MCF 10A (cell line): ENCODE measurements at regions of chr11 and their contacts with region 1.

Region 1: DNA sequence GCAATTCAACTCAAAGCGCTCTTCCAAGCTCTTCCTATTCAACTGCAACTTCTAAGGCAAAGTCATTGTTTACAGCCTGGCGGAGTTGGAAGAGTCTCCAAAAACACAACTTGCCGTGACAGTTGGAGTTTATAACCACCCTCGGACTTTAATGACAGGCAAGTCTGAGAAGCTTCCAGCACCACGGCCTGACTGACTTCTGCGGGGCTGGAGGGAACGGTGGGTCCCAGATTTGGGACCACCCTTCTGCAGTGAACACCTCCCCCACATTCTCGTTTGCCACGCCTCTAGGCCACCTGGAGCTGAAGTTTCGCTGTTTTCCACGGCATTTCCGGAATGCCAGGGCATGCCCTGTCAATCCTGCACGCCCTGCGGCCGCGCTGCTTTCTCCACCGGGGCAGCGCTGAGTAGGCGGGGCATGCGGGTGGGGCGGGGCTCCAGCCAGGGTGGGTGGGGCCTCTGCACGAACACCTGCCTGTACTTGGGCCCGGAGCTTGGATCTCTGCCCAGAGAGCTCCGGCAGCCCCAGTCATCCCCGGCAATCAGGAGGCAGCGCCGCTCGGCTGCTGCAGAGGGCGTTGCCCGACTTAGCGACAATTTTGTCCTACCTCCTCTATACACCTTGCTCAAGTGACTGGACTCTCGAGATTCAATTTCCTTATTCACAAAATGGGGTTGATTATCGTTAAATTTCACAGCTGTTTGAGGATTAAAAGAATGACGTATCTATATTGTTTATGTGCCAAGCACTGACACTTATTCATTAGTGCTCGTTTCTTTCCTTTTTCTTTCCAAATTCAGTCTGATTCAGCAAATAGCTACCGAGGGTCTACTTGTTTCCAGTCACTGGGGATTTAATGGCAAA is 48.7 kb upstream of the BIRC3 start:
- DNase-seq: peak; percentile 96
- H3K4me3 Mint-ChIP-seq: peak overlapping the region; percentile 80
- H3K27ac Mint-ChIP-seq: peak overlapping the region; percentile 93
- H3K4me1 Mint-ChIP-seq: peaks cover 28% of the 10 kb centered on the region
- H3K27me3 Mint-ChIP-seq: no peaks in the 10 kb centered on the region
- CTCF ChIP-seq: peak; percentile 37

Region 2: GRCh38 chr11:101914738-101915426 is 353.7 kb before region 1 on chr11 and contains the start of gene CEP126:
- CTCF ChIA-PET with region 1: interaction called, 7 read pairs
- POLR2A ChIA-PET with region 1: interaction called, 18 read pairs
- intact Hi-C with region 1: loop called (anchors 1 kb)
- DNase-seq: peak; percentile 92
- H3K4me3 Mint-ChIP-seq: peak within 1 kb of the TSS; percentile 96
- H3K27ac Mint-ChIP-seq: peak within 1 kb of the TSS; percentile 98
- H3K4me1 Mint-ChIP-seq: peaks cover 33% of the 10 kb centered on the region
- H3K27me3 Mint-ChIP-seq: no peaks in the 10 kb centered on the region
- CTCF ChIP-seq: peak; percentile 27
- total RNA-seq, gene CEP126: 3.1 and 4.3 TPM in 2 replicates

Region 3: DNA sequence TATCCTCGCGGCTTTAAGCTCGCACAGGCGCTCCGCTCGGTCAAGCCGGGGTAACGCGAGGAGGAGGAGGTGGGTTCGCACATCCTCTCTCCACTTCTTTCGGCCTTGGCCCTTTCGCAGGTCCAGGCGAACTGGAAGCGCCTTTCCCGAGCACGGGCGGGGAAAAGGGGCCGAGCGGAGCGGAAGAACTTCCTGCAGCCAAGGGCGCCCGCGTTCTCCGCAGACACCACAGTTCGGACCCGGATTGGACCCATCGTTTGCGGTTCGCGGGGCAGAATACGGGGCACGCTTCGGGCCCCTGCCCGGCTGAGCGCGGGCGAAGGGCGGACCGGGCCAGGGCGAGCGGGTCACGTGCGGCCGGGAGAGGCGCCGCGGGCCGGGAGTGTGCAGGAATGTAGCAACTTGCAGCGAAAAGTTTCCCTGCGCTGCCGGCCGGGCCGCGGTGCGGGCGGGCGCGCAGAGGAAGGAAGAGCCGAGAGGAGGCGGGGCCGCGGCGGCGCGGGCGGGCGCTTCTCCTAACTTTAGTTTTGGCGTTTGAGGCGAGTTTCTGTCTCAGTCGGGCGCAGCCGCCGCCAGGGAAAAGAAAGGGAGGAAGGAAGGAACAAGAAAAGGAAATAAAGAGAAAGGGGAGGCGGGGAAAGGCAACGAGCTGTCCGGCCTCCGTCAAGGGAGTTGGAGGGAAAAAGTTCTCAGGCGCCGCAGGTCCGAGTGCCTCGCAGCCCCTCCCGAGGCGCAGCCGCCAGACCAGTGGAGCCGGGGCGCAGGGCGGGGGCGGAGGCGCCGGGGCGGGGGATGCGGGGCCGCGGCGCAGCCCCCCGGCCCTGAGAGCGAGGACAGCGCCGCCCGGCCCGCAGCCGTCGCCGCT is 158.4 kb before region 1 on chr11 and contains the start of gene YAP1:
- CTCF ChIA-PET with region 1: interaction called, 14 read pairs
- POLR2A ChIA-PET with region 1: interaction called, 50 read pairs
- intact Hi-C with region 1: loop called (anchors 1 kb)
- DNase-seq: peak; percentile 92
- H3K4me3 Mint-ChIP-seq: peak within 1 kb of the TSS; percentile 92
- H3K27ac Mint-ChIP-seq: peak within 1 kb of the TSS; percentile 98
- H3K4me1 Mint-ChIP-seq: peaks cover 15% of the 10 kb centered on the region
- H3K27me3 Mint-ChIP-seq: no peaks in the 10 kb centered on the region
- CTCF ChIP-seq: no peak
- total RNA-seq, gene YAP1: 139 and 158 TPM in 2 replicates

Region 4: GRCh38 chr11:102157219-102157618 is 111.3 kb before region 1 on chr11:
- CTCF ChIA-PET with region 1: no interaction called
- POLR2A ChIA-PET with region 1: interaction called, 26 read pairs
- intact Hi-C with region 1: no loop called
- DNase-seq: peak; percentile 87
- H3K4me3 Mint-ChIP-seq: no peak overlapping the region
- H3K27ac Mint-ChIP-seq: peak overlapping the region; percentile 39
- H3K4me1 Mint-ChIP-seq: peaks cover 48% of the 10 kb centered on the region
- H3K27me3 Mint-ChIP-seq: no peaks in the 10 kb centered on the region
- CTCF ChIP-seq: no peak

Region 5: GRCh38 chr11:102225689-102226568 is 42.6 kb before region 1 on chr11:
- CTCF ChIA-PET with region 1: interaction called, 30 read pairs
- POLR2A ChIA-PET with region 1: interaction called, 131 read pairs
- intact Hi-C with region 1: loop called (anchors 5 kb)
- DNase-seq: peak; percentile 71
- H3K4me3 Mint-ChIP-seq: peak overlapping the region; percentile 48
- H3K27ac Mint-ChIP-seq: peak overlapping the region; percentile 87
- H3K4me1 Mint-ChIP-seq: peaks cover 46% of the 10 kb centered on the region
- H3K27me3 Mint-ChIP-seq: no peaks in the 10 kb centered on the region
- CTCF ChIP-seq: no peak

Region 6: GRCh38 chr11:102279641-102280170 is 11.1 kb after region 1 on chr11:
- CTCF ChIA-PET with region 1: interaction called, 21 read pairs
- POLR2A ChIA-PET with region 1: interaction called, 16 read pairs
- intact Hi-C with region 1: no loop called
- DNase-seq: peak; percentile 43
- H3K4me3 Mint-ChIP-seq: peak overlapping the region; percentile 58
- H3K27ac Mint-ChIP-seq: peak overlapping the region; percentile 9
- H3K4me1 Mint-ChIP-seq: peaks cover 13% of the 10 kb centered on the region
- H3K27me3 Mint-ChIP-seq: no peaks in the 10 kb centered on the region
- CTCF ChIP-seq: no peak

Region 7: GRCh38 chr11:102317099-102317767 is 48.7 kb after region 1 on chr11 and contains the start of gene BIRC3:
- CTCF ChIA-PET with region 1: interaction called, 11 read pairs
- POLR2A ChIA-PET with region 1: interaction called, 36 read pairs
- intact Hi-C with region 1: no loop called
- DNase-seq: peak; percentile 96
- H3K4me3 Mint-ChIP-seq: peak within 1 kb of the TSS; percentile 85
- H3K27ac Mint-ChIP-seq: peak within 1 kb of the TSS; percentile 99
- H3K4me1 Mint-ChIP-seq: peaks cover 50% of the 10 kb centered on the region
- H3K27me3 Mint-ChIP-seq: no peaks in the 10 kb centered on the region
- CTCF ChIP-seq: no peak
- total RNA-seq, gene BIRC3: 91.6 and 124 TPM in 2 replicates